HEK293 (cell line): ENCODE measurements at regions of chr6 and their contacts with region 1.

Region 1: DNA sequence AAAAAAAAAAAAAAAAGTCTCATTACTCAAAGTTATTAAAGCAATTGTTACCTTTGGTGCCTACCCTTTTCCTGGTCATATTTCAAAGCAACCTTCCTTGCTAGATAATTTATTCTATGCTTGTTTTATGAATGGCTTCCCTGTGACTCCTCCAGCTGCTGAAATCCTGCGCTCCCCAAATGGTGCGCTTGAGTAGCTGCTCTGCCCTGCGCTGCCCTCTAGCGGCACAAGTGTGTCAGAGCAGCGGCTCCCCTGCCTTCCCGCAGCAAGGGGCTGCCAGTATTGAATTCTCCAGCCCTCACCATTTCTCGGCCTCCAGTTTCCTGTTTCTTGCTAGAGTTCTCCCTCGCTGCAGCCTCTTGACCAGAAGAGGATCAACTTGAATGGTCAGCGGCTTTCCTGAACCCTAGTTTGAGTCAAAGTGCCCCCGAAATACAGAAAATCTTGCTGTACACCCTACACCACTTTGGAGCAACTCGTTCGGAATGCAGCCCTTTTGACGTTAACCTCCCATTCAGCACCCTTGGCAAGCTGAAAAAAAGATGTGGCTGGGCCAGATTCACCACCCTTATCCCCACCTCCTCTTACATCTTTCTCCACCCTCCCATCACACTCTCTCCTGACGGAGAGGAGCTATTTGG is 60.4 kb upstream of the KLHL31 start:
- H3K4me3 ChIP-seq: no peak overlapping the region
- H3K27ac ChIP-seq: no peak overlapping the region
- H3K4me1 ChIP-seq: peaks cover 6% of the 10 kb centered on the region; the same call in 1 of the 2 replicates
- CTCF ChIP-seq: peak; percentile 82

Region 2: GRCh38 chr6:53524455-53524815 is 201.5 kb before region 1 on chr6:
- CTCF ChIA-PET with region 1: interaction called, 10 read pairs
- POLR2A ChIA-PET with region 1: no interaction called
- H3K4me3 ChIP-seq: no peak overlapping the region
- H3K27ac ChIP-seq: no peak overlapping the region
- H3K4me1 ChIP-seq: peaks cover 35% of the 10 kb centered on the region
- CTCF ChIP-seq: no peak

Region 3: DNA sequence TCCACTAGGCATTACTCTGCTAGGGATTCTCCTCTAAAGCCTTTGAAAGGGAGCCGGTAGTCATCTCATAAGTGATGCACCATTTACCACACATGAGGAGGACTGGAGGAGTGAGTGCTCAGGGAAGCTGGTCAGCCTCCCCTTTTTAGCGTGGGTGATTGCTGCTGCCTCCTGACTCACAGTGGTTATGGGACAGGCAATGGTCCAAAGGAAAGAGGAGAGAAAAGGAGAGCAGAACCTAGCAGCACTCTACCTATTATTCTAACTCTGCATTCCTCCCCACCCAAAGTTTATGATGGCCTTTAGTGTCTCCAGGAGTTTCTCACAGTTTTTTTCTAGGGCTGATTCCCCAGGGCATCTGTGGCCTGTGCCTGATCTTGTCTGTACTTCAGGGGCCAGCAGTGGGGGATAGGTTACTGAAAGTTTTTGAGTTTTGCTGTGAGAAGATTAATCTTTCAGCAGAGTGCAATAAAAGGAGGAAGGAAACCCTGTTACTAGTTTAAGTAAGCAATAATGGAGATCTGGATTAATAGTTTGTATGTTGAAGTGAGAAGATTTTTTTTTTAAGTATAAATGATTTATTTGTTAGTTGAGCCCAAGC is 144.6 kb before region 1 on chr6:
- CTCF ChIA-PET with region 1: no interaction called
- POLR2A ChIA-PET with region 1: no interaction called
- H3K4me3 ChIP-seq: no peak overlapping the region
- H3K27ac ChIP-seq: no peak overlapping the region
- H3K4me1 ChIP-seq: no peaks in the 10 kb centered on the region
- CTCF ChIP-seq: no peak

Region 4: GRCh38 chr6:53651764-53652401 is 74.0 kb before region 1 on chr6:
- CTCF ChIA-PET with region 1: interaction called, 34 read pairs
- POLR2A ChIA-PET with region 1: interaction called, 3 read pairs
- H3K4me3 ChIP-seq: peak overlapping the region; percentile 66
- H3K27ac ChIP-seq: peak overlapping the region; percentile 56
- H3K4me1 ChIP-seq: no peaks in the 10 kb centered on the region; the same call in 1 of the 2 replicates
- CTCF ChIP-seq: peak; percentile 99

Region 5: GRCh38 chr6:53691667-53692133 is 34.2 kb before region 1 on chr6:
- CTCF ChIA-PET with region 1: interaction called, 12 read pairs
- POLR2A ChIA-PET with region 1: interaction called, 3 read pairs
- H3K4me3 ChIP-seq: no peak overlapping the region
- H3K27ac ChIP-seq: no peak overlapping the region
- H3K4me1 ChIP-seq: peaks cover 3% of the 10 kb centered on the region; the same call in 1 of the 2 replicates
- CTCF ChIP-seq: no peak

Region 6: GRCh38 chr6:53794720-53795253 is 68.9 kb after region 1 on chr6 and contains the start of gene LRRC1:
- CTCF ChIA-PET with region 1: interaction called, 76 read pairs
- POLR2A ChIA-PET with region 1: interaction called, 6 read pairs
- H3K4me3 ChIP-seq: peak within 1 kb of the TSS; percentile 77
- H3K27ac ChIP-seq: peak within 1 kb of the TSS; percentile 86
- H3K4me1 ChIP-seq: peaks cover 18% of the 10 kb centered on the region
- CTCF ChIP-seq: no peak; the same call in 1 of the 2 replicates

Region 7: DNA sequence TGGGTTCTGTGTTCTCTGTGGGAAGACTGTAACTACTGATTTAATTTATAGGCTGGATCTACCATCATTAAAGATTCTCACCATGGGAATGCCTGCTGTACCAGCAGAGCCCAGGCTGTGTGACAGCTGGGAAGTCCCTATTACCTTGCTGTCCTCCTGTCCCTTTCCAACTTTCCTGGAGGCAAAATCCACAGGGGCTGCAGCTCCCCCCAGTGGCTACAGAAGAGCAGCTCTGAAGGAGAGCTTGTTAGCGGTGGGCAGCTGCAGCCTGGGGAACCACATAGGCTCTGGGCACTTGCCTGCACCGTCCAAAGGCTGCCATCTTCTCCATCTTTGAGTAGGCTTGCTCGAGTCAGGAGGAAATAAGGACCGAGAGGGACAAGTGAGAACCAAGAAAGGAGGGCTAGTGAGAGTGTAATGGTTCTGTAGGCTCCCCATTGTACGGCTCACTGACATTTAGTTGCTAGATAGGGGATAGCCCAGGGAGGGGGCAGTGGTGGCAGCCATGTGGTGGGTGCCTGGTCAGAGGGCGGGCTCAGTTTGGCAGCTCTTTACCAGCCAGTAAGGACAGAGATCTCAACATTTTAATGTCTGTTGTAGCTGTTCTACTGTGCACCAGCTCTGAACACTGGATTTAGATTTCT is 230.3 kb after region 1 on chr6:
- CTCF ChIA-PET with region 1: interaction called, 190 read pairs
- POLR2A ChIA-PET with region 1: no interaction called
- H3K4me3 ChIP-seq: no peak overlapping the region
- H3K27ac ChIP-seq: no peak overlapping the region
- H3K4me1 ChIP-seq: no peaks in the 10 kb centered on the region
- CTCF ChIP-seq: peak; percentile 85; the same call in 1 of the 2 replicates

Region 8: GRCh38 chr6:54758350-54758749 is 1032.4 kb after region 1 on chr6:
- CTCF ChIA-PET with region 1: no interaction called
- POLR2A ChIA-PET with region 1: no interaction called
- H3K4me3 ChIP-seq: no peak overlapping the region
- H3K27ac ChIP-seq: no peak overlapping the region
- H3K4me1 ChIP-seq: 0 out of 2 replicates have a peak, but pooled peaks cover 6% of the 10 kb centered on the region
- CTCF ChIP-seq: no peak